HEK293 (cell line): ENCODE measurements at regions of chr1 and their contacts with region 1.

Region 1: DNA sequence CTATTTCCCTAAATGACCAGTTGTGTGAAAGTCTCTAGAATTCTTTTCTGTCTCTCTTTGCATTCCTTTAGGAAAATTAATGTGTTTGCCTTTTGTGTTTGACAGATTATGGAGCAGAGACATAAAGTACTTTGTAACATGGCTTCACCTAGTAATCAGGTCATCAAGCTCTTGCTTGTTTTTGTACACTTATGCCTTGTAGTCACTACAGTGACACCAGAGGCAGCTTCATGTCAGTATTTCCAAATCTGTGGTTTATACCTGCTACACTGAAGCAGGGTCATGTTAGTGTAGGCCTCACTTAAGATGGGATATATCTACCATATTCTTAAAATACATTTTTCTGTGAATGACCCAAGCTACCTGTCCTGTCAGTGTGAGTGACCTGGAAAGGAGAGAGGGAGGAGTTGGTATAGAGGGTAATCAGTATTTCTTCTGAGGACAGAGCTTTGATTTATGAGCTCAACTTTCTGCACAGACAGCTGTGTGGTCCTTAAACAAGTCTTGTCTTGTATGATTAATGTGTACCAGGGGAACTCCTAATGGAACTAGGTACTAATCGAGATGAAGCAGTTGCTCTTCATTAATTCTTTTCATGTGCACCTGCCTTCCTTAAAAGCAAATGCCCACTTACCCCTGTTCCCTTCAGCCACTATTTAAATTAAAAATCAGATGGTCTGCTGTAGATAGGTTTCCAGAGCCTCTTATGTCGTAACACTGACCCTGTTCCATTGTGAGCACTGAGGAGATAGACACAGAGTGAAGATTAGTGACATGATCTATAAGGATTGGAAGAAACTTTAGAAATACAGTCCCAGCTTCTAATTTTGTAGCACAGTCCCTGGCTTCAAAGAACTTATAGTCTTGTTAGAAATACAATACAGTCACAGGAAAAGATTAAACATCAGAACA is 45.7 kb downstream of the MACO1 start:
- H3K4me3 ChIP-seq: no peak overlapping the region
- H3K27ac ChIP-seq: 0 out of 2 replicates have a peak overlapping the region, but pooled peaks have one; percentile 37
- H3K4me1 ChIP-seq: peaks cover 13% of the 10 kb centered on the region; the same call in 1 of the 2 replicates
- CTCF ChIP-seq: no peak

Region 2: GRCh38 chr1:25430666-25431505 is 45.6 kb before region 1 on chr1 and contains the start of gene MACO1:
- CTCF ChIA-PET with region 1: interaction called, 10 read pairs
- POLR2A ChIA-PET with region 1: no interaction called
- H3K4me3 ChIP-seq: peak within 1 kb of the TSS; percentile 84
- H3K27ac ChIP-seq: peak within 1 kb of the TSS; percentile 76; the same call in 1 of the 2 replicates
- H3K4me1 ChIP-seq: peaks cover 27% of the 10 kb centered on the region
- CTCF ChIP-seq: no peak

Region 3: GRCh38 chr1:25443030-25443699 is 33.3 kb before region 1 on chr1:
- CTCF ChIA-PET with region 1: no interaction called
- POLR2A ChIA-PET with region 1: no interaction called
- H3K4me3 ChIP-seq: no peak overlapping the region
- H3K27ac ChIP-seq: no peak overlapping the region
- H3K4me1 ChIP-seq: peaks cover 4% of the 10 kb centered on the region; the same call in 1 of the 2 replicates
- CTCF ChIP-seq: no peak

Region 4: GRCh38 chr1:25487628-25488027 is 11.2 kb after region 1 on chr1:
- CTCF ChIA-PET with region 1: interaction called, 52 read pairs
- POLR2A ChIA-PET with region 1: no interaction called
- H3K4me3 ChIP-seq: no peak overlapping the region
- H3K27ac ChIP-seq: no peak overlapping the region
- H3K4me1 ChIP-seq: peaks cover 4% of the 10 kb centered on the region; the same call in 1 of the 2 replicates
- CTCF ChIP-seq: no peak